ENCODE measurements at regions of chr3 and their contacts with region 1.

Region 1: GRCh38 chr3:33131331-33132018 is 17.7 kb downstream of the CRTAP start:
- DNase-seq: peak in 6 of 9 donors; percentile 5 to 46 (median 37)
- ATAC-seq: peak; percentile 80
- H3K4me3 ChIP-seq: no peak overlapping the region
- H3K4me3 Mint-ChIP-seq: no peak overlapping the region
- H3K27ac ChIP-seq: no peak overlapping the region
- H3K27ac Mint-ChIP-seq: no peak overlapping the region
- H3K4me1 ChIP-seq: no peaks in the 10 kb centered on the region
- H3K4me1 Mint-ChIP-seq: peaks cover 2 to 12% (median 11%) of the 10 kb centered on the region in 7 donors
- H3K27me3 ChIP-seq: no peaks in the 10 kb centered on the region
- H3K27me3 Mint-ChIP-seq: no peaks in the 10 kb centered on the region

Region 2: DNA sequence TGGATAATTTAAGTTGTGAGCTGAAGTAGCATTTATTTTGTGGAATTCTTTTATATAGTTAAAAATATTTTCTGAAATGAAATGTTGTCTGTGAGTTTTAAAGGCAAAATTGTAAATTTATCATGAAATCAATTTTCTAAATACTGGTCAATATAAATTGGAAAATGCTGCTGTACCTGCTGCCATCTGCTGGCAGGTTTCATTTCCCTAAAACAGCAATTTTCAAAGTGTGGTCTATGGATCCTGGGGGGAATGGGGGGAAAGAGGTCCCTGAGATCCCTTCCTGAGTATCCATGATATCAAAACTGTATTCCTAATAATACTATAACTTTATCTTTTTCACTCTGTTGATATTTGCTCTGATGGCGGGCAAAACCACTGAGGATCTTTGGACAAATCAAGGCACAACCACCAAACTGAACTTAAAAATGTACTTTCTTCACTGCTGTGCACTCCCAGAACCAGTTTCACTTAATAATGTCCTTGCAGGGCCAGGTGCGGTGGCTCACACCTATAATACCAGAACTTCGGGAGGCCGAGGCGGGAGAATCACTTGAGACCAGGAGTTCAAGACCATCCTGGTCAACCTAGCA is 197.2 kb before region 1 on chr3:
- CTCF ChIA-PET with region 1: no interaction called
- POLR2A ChIA-PET with region 1: no interaction called
- intact Hi-C with region 1: no loop called
- DNase-seq: peak in 1 of 9 donors; percentile 18
- ATAC-seq: no peak
- H3K4me3 ChIP-seq: no peak overlapping the region
- H3K4me3 Mint-ChIP-seq: no peak overlapping the region
- H3K27ac ChIP-seq: no peak overlapping the region
- H3K27ac Mint-ChIP-seq: no peak overlapping the region
- H3K4me1 ChIP-seq: no peaks in the 10 kb centered on the region
- H3K4me1 Mint-ChIP-seq: no peaks in the 10 kb centered on the region
- H3K27me3 ChIP-seq: no peaks in the 10 kb centered on the region
- H3K27me3 Mint-ChIP-seq: peaks cover 0 to 16% (median 8%) of the 10 kb centered on the region in 5 donors

Region 3: DNA sequence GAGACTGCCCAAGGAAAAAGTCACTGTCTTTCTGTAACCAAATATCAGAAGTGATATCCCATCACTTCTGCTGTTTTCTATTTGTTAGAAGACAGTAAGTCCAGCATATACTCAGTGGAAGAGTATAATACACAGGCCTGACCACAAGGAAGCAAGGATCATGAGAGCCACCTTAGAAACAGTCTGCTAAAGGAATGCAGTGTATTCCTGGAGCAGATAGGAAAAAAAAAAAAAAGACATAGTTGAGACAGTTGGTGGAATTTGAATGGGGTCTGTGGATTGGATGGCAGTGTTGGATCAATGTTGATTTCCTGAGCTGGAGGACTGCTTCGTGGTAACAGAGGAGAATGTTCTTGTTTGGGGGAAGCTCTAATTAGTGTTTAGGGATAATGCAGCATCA is 119.2 kb after region 1 on chr3:
- CTCF ChIA-PET with region 1: no interaction called
- POLR2A ChIA-PET with region 1: no interaction called
- intact Hi-C with region 1: loop called in 1 of 2 experiments (anchors 5 kb)
- DNase-seq: no peak
- ATAC-seq: no peak
- H3K4me3 ChIP-seq: no peak overlapping the region
- H3K4me3 Mint-ChIP-seq: no peak overlapping the region
- H3K27ac ChIP-seq: no peak overlapping the region
- H3K27ac Mint-ChIP-seq: no peak overlapping the region
- H3K4me1 ChIP-seq: no peaks in the 10 kb centered on the region
- H3K4me1 Mint-ChIP-seq: no peaks in the 10 kb centered on the region
- H3K27me3 ChIP-seq: no peaks in the 10 kb centered on the region
- H3K27me3 Mint-ChIP-seq: peaks cover 10 to 53% (median 14%) of the 10 kb centered on the region in 5 donors

Region 4: DNA sequence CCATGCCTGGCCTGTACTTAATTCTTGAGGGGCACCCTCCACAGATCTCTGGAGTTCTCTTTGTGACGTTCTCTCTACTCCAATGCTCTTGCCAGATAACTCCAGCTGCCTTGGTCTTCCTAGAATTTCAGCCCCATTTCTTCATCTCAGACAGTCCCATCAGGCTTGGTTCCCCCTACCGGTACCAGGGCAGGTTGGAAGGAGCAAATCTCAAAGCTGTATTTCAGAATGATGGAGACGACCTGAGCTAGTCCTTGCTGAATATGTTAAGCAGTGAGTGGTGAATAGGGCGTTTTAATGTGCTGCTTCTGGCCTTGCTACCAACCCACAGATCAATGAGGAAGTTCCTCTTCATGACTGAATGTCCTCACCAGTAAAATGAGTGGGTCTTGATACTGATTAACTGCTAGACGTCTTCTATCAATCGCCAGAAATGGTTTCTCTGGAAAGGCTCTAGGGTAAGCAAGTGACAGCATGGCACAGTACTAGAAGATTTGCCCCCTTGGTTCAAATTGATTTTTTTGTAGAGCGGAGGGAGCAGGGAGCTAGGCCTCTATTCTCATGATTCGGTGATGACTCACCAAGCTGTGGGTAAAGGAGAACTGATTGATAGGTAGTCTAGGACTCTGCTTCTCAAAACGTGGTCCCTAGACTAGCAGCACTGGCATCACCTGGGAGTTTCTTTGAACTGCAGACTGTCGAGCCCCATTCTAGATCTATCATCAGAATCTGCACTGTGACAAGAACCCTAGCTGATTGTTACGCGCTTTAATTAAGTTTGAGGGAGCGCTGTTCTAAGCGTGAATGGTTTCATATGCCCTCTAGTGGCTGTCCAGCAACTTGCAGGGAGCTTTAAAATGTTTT is 241.0 kb after region 1 on chr3:
- CTCF ChIA-PET with region 1: interaction called, 11 read pairs
- POLR2A ChIA-PET with region 1: no interaction called
- intact Hi-C with region 1: loop called (anchors 1 kb)
- DNase-seq: peak in 8 of 9 donors; percentile 14 to 57 (median 38)
- ATAC-seq: peak; percentile 80
- H3K4me3 ChIP-seq: no peak overlapping the region
- H3K4me3 Mint-ChIP-seq: no peak overlapping the region
- H3K27ac ChIP-seq: no peak overlapping the region
- H3K27ac Mint-ChIP-seq: no peak overlapping the region
- H3K4me1 ChIP-seq: peaks cover 0 to 4% of the 10 kb centered on the region in 2 donors
- H3K4me1 Mint-ChIP-seq: peaks cover 2 to 8% (median 6%) of the 10 kb centered on the region in 7 donors
- H3K27me3 ChIP-seq: peaks cover 0 to 6% of the 10 kb centered on the region in 2 donors
- H3K27me3 Mint-ChIP-seq: peaks cover 12 to 32% (median 22%) of the 10 kb centered on the region in 5 donors

Region 5: DNA sequence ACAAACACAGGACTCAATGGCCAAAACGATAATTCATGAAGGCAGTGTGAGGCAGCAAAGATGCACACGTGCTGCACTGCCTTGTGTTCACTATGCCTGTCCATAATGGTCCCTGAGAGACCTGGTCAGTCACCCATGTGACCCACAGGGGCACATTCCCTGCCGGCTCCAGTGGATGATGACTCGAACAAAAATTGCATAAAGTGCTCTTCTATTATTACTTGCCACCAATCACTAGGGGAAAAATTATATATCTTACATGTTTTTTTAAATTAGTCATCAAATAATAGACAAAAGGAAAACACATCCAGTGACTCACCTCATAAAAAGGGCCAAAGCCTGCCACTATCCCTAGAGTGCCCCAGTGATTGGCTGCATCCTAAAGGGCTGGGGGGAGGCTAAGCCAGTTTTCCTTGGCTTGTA is 261.2 kb after region 1 on chr3:
- CTCF ChIA-PET with region 1: no interaction called
- POLR2A ChIA-PET with region 1: no interaction called
- intact Hi-C with region 1: no loop called
- DNase-seq: no peak
- ATAC-seq: no peak
- H3K4me3 ChIP-seq: no peak overlapping the region
- H3K4me3 Mint-ChIP-seq: no peak overlapping the region
- H3K27ac ChIP-seq: no peak overlapping the region
- H3K27ac Mint-ChIP-seq: peak overlapping the region in 2 of 9 donors; percentile 10 to 14
- H3K4me1 ChIP-seq: no peaks in the 10 kb centered on the region
- H3K4me1 Mint-ChIP-seq: peaks cover 0 to 15% (median 0%) of the 10 kb centered on the region in 7 donors
- H3K27me3 ChIP-seq: no peaks in the 10 kb centered on the region
- H3K27me3 Mint-ChIP-seq: no peaks in the 10 kb centered on the region